ENCODE measurements at regions of chr7 and their contacts with region 1.

Region 1: DNA sequence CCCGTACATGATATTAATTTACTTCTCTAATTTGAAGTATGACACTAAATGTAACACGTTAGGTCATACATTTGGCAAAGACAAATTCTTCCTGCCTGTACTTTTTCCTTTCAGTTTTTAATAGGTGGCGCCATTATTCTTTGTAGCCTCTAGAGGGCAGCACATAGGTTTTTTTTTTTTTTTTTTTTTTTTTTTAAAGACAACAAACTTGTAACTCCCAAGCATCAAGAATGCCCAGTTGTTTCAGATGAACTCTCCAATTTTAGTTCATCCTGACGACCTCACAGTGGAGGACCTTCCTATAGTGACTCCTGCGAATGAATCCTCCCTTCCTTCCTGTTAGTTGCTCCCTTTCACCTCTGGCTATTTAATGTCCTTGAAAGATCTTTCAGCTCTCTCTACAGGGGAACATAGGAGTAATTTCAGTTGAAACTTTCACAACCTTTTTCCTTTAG is 139.3 kb upstream of the HDAC9 start:
- DNase-seq: no peak
- H3K4me3 Mint-ChIP-seq: no peak overlapping the region
- H3K27ac Mint-ChIP-seq: no peak overlapping the region
- H3K4me1 Mint-ChIP-seq: no peaks in the 10 kb centered on the region
- H3K27me3 Mint-ChIP-seq: peaks cover 2% of the 10 kb centered on the region

Region 2: DNA sequence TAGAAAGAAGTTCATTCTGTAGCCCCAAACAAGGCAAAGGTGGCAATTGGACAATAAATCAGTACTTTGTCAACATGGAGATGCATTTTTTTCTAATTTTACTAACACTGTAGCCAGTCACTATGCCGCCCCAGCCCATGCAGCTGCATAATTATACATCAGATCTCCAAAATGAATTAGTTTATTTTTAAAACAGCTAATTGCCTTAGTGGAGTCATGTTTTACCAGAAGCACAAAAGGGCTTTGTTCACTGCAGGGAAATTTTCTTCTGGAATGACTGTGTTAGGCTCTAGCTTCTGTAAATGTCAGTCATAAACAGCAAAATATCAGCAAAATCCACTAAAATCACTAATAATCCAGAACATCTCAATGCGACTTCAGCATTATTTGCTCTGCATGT is 119.3 kb after region 1 on chr7:
- intact Hi-C with region 1: no loop called
- DNase-seq: no peak
- H3K4me3 Mint-ChIP-seq: no peak overlapping the region
- H3K27ac Mint-ChIP-seq: no peak overlapping the region
- H3K4me1 Mint-ChIP-seq: no peaks in the 10 kb centered on the region
- H3K27me3 Mint-ChIP-seq: no peaks in the 10 kb centered on the region

Region 3: DNA sequence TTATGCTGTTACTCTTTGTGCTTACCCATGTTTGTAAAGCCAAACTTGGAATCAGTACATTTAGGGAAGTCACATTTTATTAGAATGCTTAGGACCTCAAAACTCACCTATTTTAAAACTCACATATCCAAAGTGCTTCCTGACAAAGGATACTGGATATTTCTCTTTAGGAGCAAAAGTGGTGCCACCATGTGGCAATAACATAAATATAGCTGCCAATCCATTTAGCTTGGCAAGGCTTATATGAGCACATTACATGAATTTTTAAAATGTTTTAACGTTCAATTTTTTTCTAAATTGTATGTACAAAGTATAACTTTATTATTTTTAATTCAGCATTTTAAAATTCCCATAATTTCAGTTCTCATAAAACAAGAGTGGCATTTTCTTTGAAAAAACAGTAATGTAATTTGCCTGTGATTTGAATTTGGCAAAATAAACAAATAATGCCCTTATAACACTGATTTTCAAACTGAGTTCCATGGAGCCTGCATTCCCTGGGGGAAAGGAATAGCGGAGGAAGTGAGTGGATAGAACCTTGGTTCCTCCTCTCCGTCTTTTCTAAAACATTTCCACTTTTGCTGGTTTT is 214.8 kb after region 1 on chr7:
- intact Hi-C with region 1: loop called (anchors 5 kb)
- DNase-seq: no peak
- H3K4me3 Mint-ChIP-seq: no peak overlapping the region
- H3K27ac Mint-ChIP-seq: no peak overlapping the region
- H3K4me1 Mint-ChIP-seq: no peaks in the 10 kb centered on the region
- H3K27me3 Mint-ChIP-seq: no peaks in the 10 kb centered on the region

Region 4: DNA sequence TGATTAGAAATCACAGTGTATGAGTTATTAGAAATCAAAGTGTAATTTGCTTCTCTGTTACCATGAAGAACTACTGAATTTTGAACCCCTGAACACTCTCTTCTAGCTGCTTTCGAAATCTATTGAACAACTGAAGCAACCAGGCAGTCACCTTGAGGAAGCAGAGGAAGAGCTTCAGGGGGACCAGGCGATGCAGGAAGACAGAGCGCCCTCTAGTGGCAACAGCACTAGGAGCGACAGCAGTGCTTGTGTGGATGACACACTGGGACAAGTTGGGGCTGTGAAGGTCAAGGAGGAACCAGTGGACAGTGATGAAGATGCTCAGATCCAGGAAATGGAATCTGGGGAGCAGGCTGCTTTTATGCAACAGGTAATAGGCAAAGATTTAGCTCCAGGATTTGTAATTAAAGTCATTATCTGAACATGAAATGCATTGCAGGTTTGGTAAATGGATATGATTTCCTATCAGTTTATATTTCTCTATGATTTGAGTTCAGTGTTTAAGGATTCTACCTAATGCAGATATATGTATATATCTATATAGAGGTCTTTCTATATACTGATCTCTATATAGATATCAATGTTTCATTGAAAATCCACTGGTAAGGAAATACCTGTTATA is 310.0 kb after region 1 on chr7:
- intact Hi-C with region 1: loop called (anchors 2 kb)
- DNase-seq: peak; percentile 42
- H3K4me3 Mint-ChIP-seq: no peak overlapping the region
- H3K27ac Mint-ChIP-seq: no peak overlapping the region
- H3K4me1 Mint-ChIP-seq: no peaks in the 10 kb centered on the region
- H3K27me3 Mint-ChIP-seq: no peaks in the 10 kb centered on the region

Measured in activated T-helper 2 cell treated with anti-CD3 and anti-CD28 coated beads, Interferon-gamma antibody, Interleukin-2, Interleukin-4, amounts not matched to agents 10 μg/mL and 5 μg/mL and 100 μg/mL, durations not matched to agents 14 hours and 24 hours and 36 hours (primary cell).